ENCODE measurements at regions of chr6 and their contacts with region 1.

Region 1: DNA sequence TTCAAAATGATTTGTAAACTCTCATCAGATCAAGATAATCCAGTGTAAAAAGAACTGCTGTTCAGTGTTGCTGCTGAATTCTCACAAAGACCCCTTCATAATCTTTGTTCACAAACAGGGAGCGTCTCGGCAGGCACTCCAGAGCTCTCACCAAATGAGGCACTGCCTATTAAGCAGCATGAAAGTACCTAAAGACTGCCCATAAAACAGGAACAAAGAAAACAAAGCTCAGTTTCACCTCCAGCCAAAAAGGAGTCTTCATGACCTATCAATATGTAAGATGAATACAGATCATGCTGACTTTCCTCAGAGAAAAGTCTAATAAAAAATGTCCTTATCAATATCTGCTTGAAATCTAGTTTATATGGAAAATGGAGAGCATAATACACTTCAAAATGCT is 41.8 kb downstream of the GPR63 start:
- DNase-seq: no peak
- ATAC-seq: no peak
- H3K4me3 ChIP-seq: no peak overlapping the region
- H3K4me3 Mint-ChIP-seq: no peak overlapping the region
- H3K27ac ChIP-seq: no peak overlapping the region
- H3K27ac Mint-ChIP-seq: no peak overlapping the region
- H3K4me1 ChIP-seq: no peaks in the 10 kb centered on the region
- H3K4me1 Mint-ChIP-seq: no peaks in the 10 kb centered on the region
- H3K27me3 ChIP-seq: peaks cover 0 to 5% of the 10 kb centered on the region in 2 experiments
- H3K27me3 Mint-ChIP-seq: no peaks in the 10 kb centered on the region

Region 2: GRCh38 chr6:96816301-96816817 is 20.9 kb after region 1 on chr6:
- CTCF ChIA-PET with region 1: no interaction called
- POLR2A ChIA-PET with region 1: no interaction called
- DNase-seq: no peak
- ATAC-seq: no peak
- H3K4me3 ChIP-seq: no peak overlapping the region
- H3K4me3 Mint-ChIP-seq: no peak overlapping the region
- H3K27ac ChIP-seq: no peak overlapping the region
- H3K27ac Mint-ChIP-seq: no peak overlapping the region
- H3K4me1 ChIP-seq: no peaks in the 10 kb centered on the region
- H3K4me1 Mint-ChIP-seq: no peaks in the 10 kb centered on the region
- H3K27me3 ChIP-seq: no peaks in the 10 kb centered on the region
- H3K27me3 Mint-ChIP-seq: peaks cover 12 to 13% of the 10 kb centered on the region in 2 donors

Region 3: DNA sequence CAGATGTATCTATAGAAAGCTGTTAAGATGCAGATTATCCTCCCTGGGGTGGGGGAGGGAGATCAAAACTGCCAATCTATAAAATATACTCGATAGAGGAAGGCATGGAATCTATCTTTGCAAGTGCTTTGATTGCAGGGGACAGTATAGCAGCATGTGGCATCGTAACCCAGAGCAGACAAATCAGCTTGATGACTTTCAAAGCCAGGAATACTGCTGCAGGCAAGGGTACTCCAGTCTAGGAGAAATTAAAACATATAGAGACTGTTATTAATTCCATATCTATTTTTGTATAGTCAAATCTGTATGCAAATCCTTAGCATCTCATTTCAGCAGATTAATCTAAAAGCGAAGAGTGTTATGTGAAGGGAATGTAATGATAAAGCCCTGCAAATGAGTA is 328.2 kb after region 1 on chr6:
- CTCF ChIA-PET with region 1: interaction called in 1 of 2 experiments, 11 read pairs
- POLR2A ChIA-PET with region 1: no interaction called
- DNase-seq: no peak
- ATAC-seq: no peak
- H3K4me3 ChIP-seq: no peak overlapping the region
- H3K4me3 Mint-ChIP-seq: no peak overlapping the region
- H3K27ac ChIP-seq: no peak overlapping the region
- H3K27ac Mint-ChIP-seq: no peak overlapping the region
- H3K4me1 ChIP-seq: no peaks in the 10 kb centered on the region
- H3K4me1 Mint-ChIP-seq: no peaks in the 10 kb centered on the region
- H3K27me3 ChIP-seq: no peaks in the 10 kb centered on the region
- H3K27me3 Mint-ChIP-seq: no peaks in the 10 kb centered on the region

Measured in T-cell (primary cell).